MCF 10A (cell line): ENCODE measurements at regions of chr1 and their contacts with region 1.

Region 1: DNA sequence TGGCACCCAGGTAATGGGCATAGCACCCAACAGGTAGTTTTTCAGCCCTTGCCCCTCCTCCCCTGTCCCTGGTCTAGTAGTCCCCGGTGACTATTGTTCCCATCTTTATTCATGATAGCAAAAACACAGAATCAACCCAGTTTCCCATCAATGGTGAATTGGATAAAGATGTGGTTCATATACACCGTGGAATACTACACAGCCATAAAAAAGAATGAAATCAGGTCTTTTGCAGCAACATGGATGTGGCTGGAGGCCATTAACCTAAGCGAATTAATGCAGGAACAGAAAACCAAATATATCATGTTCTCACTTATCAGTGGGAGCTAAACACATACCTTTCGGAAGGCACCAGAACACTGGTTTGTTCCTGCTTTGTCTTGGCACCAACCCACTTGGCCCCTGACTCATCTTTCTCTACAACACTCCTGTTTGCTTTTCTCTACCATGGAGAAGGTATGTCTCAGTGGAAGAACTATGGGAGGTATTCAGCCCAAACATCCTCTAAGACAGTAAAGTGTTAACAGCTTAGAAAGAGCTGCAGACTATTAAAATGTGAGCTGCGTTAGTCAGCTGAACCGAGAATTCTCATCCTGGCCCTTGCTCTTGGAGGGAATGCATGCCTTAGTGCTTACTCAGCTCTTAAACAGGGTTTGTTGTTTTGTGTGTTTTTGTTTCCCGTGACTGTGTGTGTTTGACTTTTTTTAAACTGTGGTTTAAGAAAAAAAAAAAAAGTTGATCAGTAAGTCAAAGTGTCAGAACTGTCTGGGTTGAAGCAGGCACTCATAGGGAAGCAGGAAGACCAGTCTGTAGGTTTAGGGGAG is 203.0 kb downstream of the TOMM20 start:
- DNase-seq: peak; percentile 92
- H3K4me3 Mint-ChIP-seq: peak overlapping the region; percentile 26
- H3K27ac Mint-ChIP-seq: peak overlapping the region; percentile 83
- H3K4me1 Mint-ChIP-seq: peaks cover 20% of the 10 kb centered on the region
- H3K27me3 Mint-ChIP-seq: no peaks in the 10 kb centered on the region
- CTCF ChIP-seq: no peak

Region 2: GRCh38 chr1:234963180-234963903 is 37.7 kb after region 1 on chr1:
- CTCF ChIA-PET with region 1: no interaction called
- POLR2A ChIA-PET with region 1: interaction called, 5 read pairs
- intact Hi-C with region 1: loop called (anchors 2 kb)
- DNase-seq: peak; percentile 50
- H3K4me3 Mint-ChIP-seq: no peak overlapping the region
- H3K27ac Mint-ChIP-seq: peak overlapping the region; percentile 28
- H3K4me1 Mint-ChIP-seq: peaks cover 38% of the 10 kb centered on the region
- H3K27me3 Mint-ChIP-seq: no peaks in the 10 kb centered on the region
- CTCF ChIP-seq: no peak

Region 3: DNA sequence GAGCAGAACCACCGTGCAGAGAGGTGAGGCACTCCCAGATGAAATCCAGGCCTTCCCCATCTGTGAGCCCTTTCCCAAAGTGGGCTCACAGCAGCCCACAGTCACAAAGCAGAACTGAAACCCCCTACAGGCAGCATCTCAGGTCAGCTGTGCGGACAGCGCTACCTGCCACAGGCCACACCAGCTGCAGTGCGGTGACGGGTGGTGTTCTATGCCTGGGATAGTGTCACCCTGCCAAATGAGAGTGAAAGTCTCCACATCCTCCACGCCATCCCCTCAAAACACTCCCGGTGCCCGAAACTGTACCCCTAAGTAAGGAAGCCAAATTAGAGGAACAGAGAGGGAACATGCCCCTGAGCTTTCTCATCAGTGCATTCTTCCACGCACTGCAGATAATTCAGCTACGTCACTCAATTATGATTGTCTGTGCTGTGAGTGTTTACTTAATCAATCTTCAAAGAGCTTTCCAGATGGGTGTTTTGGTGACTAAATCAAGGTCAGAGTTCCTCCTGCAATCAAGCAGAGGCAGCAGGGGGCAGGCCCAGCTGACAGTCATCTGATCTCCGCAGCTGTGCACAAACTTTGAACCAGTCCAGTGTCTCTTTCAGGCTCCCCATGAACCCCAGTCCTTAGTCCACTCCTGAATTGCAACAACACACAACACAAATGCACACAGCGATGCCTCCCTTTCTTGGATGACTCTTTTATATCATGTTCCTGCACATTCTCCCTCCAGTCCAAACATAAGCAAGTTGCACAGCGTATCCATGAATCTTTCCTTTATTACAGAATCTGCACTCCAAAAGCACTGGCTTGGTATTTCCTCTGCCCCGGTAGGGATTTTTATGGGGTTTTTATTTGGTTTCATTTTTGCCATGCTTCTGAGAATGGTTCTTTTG is 53.0 kb after region 1 on chr1:
- CTCF ChIA-PET with region 1: interaction called, 3 read pairs
- POLR2A ChIA-PET with region 1: interaction called, 4 read pairs
- intact Hi-C with region 1: loop called (anchors 5 kb)
- DNase-seq: peak; percentile 68
- H3K4me3 Mint-ChIP-seq: peak overlapping the region; percentile 20
- H3K27ac Mint-ChIP-seq: peak overlapping the region; percentile 96
- H3K4me1 Mint-ChIP-seq: peaks cover 50% of the 10 kb centered on the region
- H3K27me3 Mint-ChIP-seq: no peaks in the 10 kb centered on the region
- CTCF ChIP-seq: no peak

Region 4: DNA sequence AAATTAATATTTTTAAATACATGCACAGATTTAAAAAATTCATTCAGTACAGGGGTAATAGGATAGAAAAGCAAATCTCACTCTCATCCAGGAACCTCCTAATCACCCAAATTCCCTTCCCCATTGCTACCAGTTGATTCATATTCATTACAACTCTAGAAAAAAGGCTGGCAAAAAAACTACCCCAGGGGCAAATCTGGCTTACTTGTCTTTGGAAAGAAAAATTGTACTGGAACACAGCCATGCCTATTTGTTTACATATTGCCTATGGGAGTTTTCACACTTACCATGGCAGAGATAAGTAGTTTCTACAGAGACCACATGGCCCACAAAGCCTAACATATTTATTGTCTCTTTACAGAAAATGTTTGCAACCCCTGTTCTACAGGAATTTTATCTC is 244.3 kb after region 1 on chr1:
- CTCF ChIA-PET with region 1: no interaction called
- POLR2A ChIA-PET with region 1: no interaction called
- intact Hi-C with region 1: no loop called
- DNase-seq: peak; percentile 67
- H3K4me3 Mint-ChIP-seq: no peak overlapping the region
- H3K27ac Mint-ChIP-seq: no peak overlapping the region
- H3K4me1 Mint-ChIP-seq: no peaks in the 10 kb centered on the region
- H3K27me3 Mint-ChIP-seq: no peaks in the 10 kb centered on the region
- CTCF ChIP-seq: no peak